ENCODE measurements at regions of chr1 and their contacts with region 1.

Region 1: GRCh38 chr1:53450225-53450624 is 9.0 kb upstream of the DMRTB1 start:
- DNase-seq: no peak
- H3K4me3 ChIP-seq: no peak overlapping the region
- H3K27ac ChIP-seq: no peak overlapping the region
- H3K4me1 ChIP-seq: no peaks in the 10 kb centered on the region
- H3K27me3 ChIP-seq: peaks cover 27 to 52% of the 10 kb centered on the region in 2 experiments
- CTCF ChIP-seq: peak; percentile 16 to 33
- POLR2A ChIP-seq: no peak

Region 2: GRCh38 chr1:53417003-53417570 is 33.1 kb before region 1 on chr1:
- CTCF ChIA-PET with region 1: no interaction called
- POLR2A ChIA-PET with region 1: interaction called, 10 read pairs
- dilution Hi-C with region 1: no loop called
- intact Hi-C with region 1: no loop called
- DNase-seq: no peak
- H3K4me3 ChIP-seq: no peak overlapping the region
- H3K27ac ChIP-seq: no peak overlapping the region
- H3K4me1 ChIP-seq: no peaks in the 10 kb centered on the region
- H3K27me3 ChIP-seq: peaks cover 17 to 43% of the 10 kb centered on the region in 2 experiments
- CTCF ChIP-seq: no peak
- POLR2A ChIP-seq: no peak

Measured in endothelial cell of umbilical vein (primary cell).